ENCODE measurements at regions of chr10 and their contacts with region 1.

Region 1: GRCh38 chr10:93916257-93917063 is 22.7 kb downstream of the SLC35G1 start:
- DNase-seq: no peak
- H3K4me3 ChIP-seq: peak overlapping the region in 1 of 4 donors; percentile 16
- H3K27ac ChIP-seq: no peak overlapping the region
- H3K4me1 ChIP-seq: peaks cover 0 to 6% (median 0%) of the 10 kb centered on the region in 3 donors
- H3K27me3 ChIP-seq: no peaks in the 10 kb centered on the region
- CTCF ChIP-seq: peak in 3 of 6 experiments; percentile 47 to 65 (median 49)
- POLR2A ChIP-seq: no peak

Region 2: DNA sequence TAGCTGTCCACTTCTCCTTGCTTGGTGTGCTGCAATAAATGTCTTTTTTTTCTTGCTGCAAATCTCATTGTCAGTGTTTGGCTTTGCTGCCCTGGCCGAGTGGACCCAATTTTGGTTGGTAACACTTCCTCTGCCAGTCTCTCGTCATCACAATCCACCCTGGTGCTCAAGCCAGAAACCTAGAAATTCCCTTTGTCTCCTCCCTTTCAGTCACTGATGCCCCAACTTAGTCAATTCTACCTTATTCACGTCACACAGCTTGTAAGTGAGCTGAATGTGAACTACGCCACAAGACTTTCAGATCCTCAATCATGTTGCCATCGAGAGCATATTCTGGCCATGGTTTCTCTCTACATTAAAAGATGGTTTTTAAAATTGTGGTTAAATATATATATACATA is 201.1 kb before region 1 on chr10:
- intact Hi-C with region 1: no loop called
- DNase-seq: no peak
- H3K4me3 ChIP-seq: no peak overlapping the region
- H3K27ac ChIP-seq: no peak overlapping the region
- H3K4me1 ChIP-seq: no peaks in the 10 kb centered on the region
- H3K27me3 ChIP-seq: peaks cover 0 to 4% (median 0%) of the 10 kb centered on the region in 4 donors
- CTCF ChIP-seq: no peak
- POLR2A ChIP-seq: no peak

Region 3: GRCh38 chr10:93762979-93763391 is 153.5 kb before region 1 on chr10:
- intact Hi-C with region 1: no loop called
- DNase-seq: no peak
- H3K4me3 ChIP-seq: no peak overlapping the region
- H3K27ac ChIP-seq: no peak overlapping the region
- H3K4me1 ChIP-seq: no peaks in the 10 kb centered on the region
- H3K27me3 ChIP-seq: peaks cover 0 to 17% (median 0%) of the 10 kb centered on the region in 4 donors
- CTCF ChIP-seq: no peak
- POLR2A ChIP-seq: no peak

Region 4: DNA sequence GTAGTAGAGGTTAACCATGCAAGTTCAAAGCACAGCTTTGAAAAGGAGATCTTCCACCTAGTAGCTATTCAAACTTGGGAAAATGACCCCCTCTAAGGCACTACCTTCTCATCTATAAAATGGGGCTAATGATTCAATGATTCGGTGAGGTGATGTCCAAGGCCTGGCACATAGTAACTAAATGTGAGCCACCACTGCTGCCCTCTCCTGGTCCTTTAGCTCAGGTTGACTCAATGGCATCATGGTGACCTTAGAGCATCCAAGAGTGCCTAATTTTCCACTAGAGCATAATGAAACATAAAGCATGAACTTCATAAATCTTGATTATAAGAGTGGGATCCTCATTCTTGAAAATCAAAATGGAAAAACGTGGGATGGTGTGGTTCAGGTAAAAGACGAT is 61.0 kb after region 1 on chr10:
- intact Hi-C with region 1: no loop called
- DNase-seq: no peak
- H3K4me3 ChIP-seq: no peak overlapping the region
- H3K27ac ChIP-seq: no peak overlapping the region
- H3K4me1 ChIP-seq: no peaks in the 10 kb centered on the region
- H3K27me3 ChIP-seq: peaks cover 0 to 5% (median 0%) of the 10 kb centered on the region in 4 donors
- CTCF ChIP-seq: no peak
- POLR2A ChIP-seq: no peak

Region 5: GRCh38 chr10:94320285-94320914 is 403.9 kb after region 1 on chr10:
- intact Hi-C with region 1: loop called (anchors 5 kb)
- DNase-seq: no peak
- H3K4me3 ChIP-seq: no peak overlapping the region
- H3K27ac ChIP-seq: no peak overlapping the region
- H3K4me1 ChIP-seq: peaks cover 0 to 18% (median 0%) of the 10 kb centered on the region in 3 donors
- H3K27me3 ChIP-seq: no peaks in the 10 kb centered on the region
- CTCF ChIP-seq: peak; percentile 66 to 89 (median 80)
- POLR2A ChIP-seq: no peak